MCF 10A (cell line): ENCODE measurements at regions of chr1 and their contacts with region 1.

Region 1: DNA sequence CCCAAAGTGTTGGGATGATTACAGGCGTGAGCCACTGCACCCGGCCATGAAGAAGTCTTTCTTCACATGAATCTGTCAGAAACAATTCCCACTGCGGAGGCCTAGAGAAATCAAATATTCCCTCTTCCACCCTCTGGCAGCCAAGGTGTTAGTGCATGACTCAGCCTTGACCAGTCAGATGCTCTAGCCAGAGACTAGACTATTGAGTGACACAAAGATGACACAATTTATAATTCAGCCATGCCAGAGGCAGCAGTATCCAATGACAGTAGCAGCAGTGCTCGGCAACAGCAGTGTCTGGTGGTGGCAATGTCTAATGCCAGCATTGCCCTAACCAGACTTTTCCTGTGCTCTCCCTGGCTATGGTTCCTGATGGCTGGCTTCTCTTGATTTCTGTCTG is 8.7 kb downstream of the CTXND2 start:
- DNase-seq: peak; percentile 90
- H3K4me3 Mint-ChIP-seq: no peak overlapping the region
- H3K27ac Mint-ChIP-seq: peak overlapping the region; percentile 2
- H3K4me1 Mint-ChIP-seq: peaks cover 12% of the 10 kb centered on the region
- H3K27me3 Mint-ChIP-seq: no peaks in the 10 kb centered on the region
- CTCF ChIP-seq: no peak

Region 2: GRCh38 chr1:150881331-150882070 is 14.1 kb before region 1 on chr1:
- CTCF ChIA-PET with region 1: interaction called, 4 read pairs
- POLR2A ChIA-PET with region 1: interaction called, 37 read pairs
- intact Hi-C with region 1: no loop called
- DNase-seq: peak; percentile 96
- H3K4me3 Mint-ChIP-seq: peak overlapping the region; percentile 43
- H3K27ac Mint-ChIP-seq: peak overlapping the region; percentile 77
- H3K4me1 Mint-ChIP-seq: peaks cover 27% of the 10 kb centered on the region
- H3K27me3 Mint-ChIP-seq: no peaks in the 10 kb centered on the region
- CTCF ChIP-seq: no peak

Region 3: DNA sequence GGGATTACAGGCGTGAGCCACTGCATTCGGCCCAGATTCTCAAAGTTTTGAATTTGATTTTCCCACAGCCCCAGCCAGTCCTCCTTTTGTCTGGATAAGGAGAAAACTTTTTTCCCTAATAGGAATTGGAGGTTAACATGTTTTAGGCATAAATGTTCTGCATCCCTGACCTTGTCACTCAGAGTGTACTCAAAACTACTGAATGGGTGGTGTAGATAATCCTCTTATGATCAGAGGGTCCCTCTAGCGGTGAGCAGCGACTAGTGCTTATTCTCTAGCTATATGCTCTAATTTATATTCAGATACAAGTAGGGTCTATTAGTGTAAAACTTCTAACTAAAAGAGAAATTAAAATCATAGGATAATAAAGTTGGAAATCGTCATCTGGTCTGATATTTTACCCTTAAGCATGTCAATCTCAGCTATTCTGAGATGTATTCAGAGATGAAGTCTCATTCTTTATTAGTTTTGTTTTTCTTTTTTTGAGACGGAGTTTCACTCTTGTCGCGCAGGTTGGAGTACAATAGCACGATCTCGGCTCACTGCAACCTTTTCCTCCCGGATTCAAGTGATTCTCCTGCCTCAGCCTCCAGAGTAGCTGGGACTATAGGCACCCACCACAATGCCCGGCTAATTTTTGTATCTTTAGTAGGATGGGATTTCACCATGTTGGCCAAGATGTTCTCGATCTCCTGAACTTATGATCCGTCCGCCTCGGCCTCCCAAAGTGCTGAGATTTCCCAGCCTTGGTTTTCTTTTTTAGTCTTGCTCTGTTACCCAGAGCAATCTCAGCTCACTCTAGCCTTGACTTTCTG is 356.3 kb after region 1 on chr1:
- CTCF ChIA-PET with region 1: no interaction called
- POLR2A ChIA-PET with region 1: no interaction called
- intact Hi-C with region 1: no loop called
- DNase-seq: peak; percentile 85
- H3K4me3 Mint-ChIP-seq: no peak overlapping the region
- H3K27ac Mint-ChIP-seq: peak overlapping the region; percentile 12
- H3K4me1 Mint-ChIP-seq: peaks cover 3% of the 10 kb centered on the region
- H3K27me3 Mint-ChIP-seq: no peaks in the 10 kb centered on the region
- CTCF ChIP-seq: peak; percentile 90